Right ventricle myocardium inferior (tissue), 1 donor: ENCODE measurements at regions of chr7 and their contacts with region 1.

Region 1: DNA sequence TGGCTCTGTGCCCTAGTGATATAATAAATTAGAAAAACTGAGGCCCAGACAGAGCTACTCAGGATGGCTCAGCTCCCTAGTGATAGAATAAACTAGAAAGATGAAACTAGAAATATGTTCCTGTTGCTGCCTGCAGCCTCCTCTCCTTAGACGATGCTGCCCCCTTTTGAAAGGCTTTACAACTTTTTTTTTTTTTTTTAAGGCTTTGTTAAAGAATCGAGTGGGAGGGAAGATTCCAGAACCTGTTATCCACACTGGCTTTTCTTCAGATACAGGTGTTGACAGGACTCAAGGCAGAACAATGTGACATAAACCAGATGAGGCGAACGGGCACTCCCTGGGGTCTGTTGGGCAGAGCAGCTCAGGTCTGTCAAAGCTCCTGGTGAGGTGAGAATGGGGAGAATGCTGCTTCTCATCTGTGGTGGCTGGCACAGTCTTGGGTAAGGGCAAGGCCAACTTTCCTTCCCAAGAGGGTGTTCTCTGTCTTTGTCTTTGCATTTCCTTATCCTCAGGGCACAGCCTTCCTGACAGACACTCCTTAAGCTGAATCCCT is 175.1 kb downstream of the COBL start:
- DNase-seq: no peak
- ATAC-seq: peak; percentile 72

Region 2: GRCh38 chr7:50614721-50615518 is 526.6 kb before region 1 on chr7:
- intact Hi-C with region 1: loop called (anchors 5 kb)
- DNase-seq: no peak
- ATAC-seq: peak; percentile 47

Region 3: GRCh38 chr7:50687575-50688225 is 453.8 kb before region 1 on chr7:
- intact Hi-C with region 1: loop called (anchors 5 kb)
- DNase-seq: no peak
- ATAC-seq: peak; percentile 74

Region 4: DNA sequence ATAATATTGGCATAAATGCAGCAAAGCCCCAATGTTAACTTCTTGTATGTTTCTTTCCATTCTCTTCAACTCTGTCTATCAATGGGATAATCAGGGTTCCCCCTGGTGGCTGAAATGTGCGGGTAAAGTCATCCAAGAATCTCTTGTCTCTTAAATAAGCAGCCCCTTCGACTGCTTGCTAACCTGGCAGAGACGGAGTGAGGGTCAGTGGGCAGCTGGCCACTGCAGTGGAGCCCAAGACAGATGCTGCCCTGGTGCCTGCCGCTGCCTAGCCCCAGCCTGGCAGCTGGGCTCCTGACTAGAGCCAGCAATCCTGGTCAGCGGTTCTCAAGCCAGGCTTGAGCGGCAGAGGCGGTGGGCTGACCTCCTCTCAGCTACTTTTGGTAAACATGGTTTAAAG is 73.8 kb before region 1 on chr7:
- intact Hi-C with region 1: loop called (anchors 2 kb)
- DNase-seq: no peak
- ATAC-seq: peak; percentile 23